ENCODE measurements at regions of chr18 and their contacts with region 1.

Region 1: GRCh38 chr18:36296650-36297416 is 680 bp upstream of the FHOD3 start:
- DNase-seq: peak; percentile 56
- ATAC-seq: peak; percentile 71 to 80

Region 2: DNA sequence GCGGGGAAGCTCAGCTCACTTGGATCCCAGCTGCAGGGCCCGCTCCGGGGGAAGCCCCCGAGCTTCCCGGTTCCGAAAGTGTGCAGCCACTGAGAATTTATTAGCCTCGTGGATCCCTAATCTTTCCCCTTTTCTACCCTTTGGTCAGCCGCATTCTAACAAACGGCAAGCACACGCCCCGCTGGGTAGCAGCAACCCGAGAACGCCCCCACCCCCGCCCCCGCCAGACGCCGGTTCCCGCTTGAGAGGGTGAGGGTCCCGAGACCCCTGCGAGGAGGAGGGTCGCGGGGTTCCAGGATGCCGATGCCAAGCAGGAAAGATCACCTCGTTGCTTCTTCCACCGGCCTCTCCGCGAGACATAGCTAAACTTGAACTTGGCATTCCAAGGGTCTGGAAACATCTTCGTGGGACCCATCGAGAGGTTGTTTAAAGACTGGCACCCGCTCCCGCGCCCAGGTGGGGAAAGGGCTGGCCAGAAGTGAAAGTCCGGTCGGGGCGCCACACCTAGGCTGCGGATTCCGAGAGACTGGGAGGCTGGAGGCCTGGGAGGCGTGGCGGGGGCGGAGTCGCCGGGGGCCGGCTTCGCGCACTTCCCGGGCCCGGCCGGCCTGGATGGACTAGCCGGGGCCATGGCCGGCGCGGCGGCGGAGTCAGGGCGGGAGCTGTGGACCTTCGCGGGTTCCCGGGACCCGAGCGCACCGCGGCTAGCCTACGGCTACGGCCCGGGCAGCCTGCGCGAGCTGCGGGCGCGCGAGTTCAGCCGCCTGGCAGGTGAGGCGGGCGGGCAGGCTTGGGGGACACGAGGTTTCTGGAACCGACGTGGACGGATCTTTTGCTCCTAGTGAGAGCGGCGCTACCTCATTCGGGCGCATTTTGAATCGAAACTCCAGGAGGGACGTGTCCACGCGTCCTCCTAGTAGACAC is 109.7 kb before region 1 on chr18 and contains the start of gene MOCOS:
- intact Hi-C with region 1: loop called in 1 of 2 experiments (anchors 5 kb)
- DNase-seq: peak; percentile 82
- ATAC-seq: peak; percentile 95 to 98
- total RNA-seq, gene MOCOS: 0.97 to 1.4 TPM

Region 3: GRCh38 chr18:36333414-36333813 is 36.6 kb after region 1 on chr18:
- intact Hi-C with region 1: loop called in 1 of 2 experiments (anchors 5 kb)
- DNase-seq: no peak
- ATAC-seq: no peak

Region 4: GRCh38 chr18:36572135-36572856 is 275.5 kb after region 1 on chr18:
- intact Hi-C with region 1: loop called (anchors 5 to 10 kb)
- DNase-seq: no peak
- ATAC-seq: peak; percentile 72 to 83